Activated CD4-positive, alpha-beta memory T cell treated with anti-CD3 and anti-CD28 coated beads for 36 hours (primary cell): ENCODE measurements at regions of chr11 and their contacts with region 1.

Region 1: DNA sequence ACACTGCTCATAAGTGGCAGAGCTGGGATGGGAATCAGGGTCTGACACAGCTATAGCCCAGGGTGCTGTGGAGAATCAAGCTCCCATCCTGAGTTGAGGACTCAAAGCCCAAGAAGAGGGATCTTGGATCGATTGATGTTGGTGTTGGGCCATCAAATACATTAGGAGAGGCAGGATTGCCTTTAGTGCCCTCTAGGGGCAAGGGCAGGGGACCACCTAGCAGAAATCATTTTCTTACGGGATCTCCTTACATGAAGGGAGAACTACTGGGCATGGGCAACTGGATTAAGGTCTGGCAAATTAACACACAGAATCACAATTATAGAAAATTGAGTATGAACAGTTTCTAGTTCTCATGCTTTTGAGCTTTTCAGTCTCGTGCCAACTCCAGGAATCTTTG is 24.9 kb upstream of the EMSY start:
- DNase-seq: peak; percentile 30
- H3K4me3 Mint-ChIP-seq: no peak overlapping the region
- H3K27ac Mint-ChIP-seq: no peak overlapping the region
- H3K4me1 Mint-ChIP-seq: peaks cover 11% of the 10 kb centered on the region
- H3K27me3 Mint-ChIP-seq: peaks cover 11% of the 10 kb centered on the region

Region 2: GRCh38 chr11:76120513-76121101 is 299.3 kb before region 1 on chr11:
- CTCF ChIA-PET with region 1: no interaction called
- POLR2A ChIA-PET with region 1: no interaction called
- intact Hi-C with region 1: no loop called
- DNase-seq: no peak
- H3K4me3 Mint-ChIP-seq: no peak overlapping the region
- H3K27ac Mint-ChIP-seq: no peak overlapping the region
- H3K4me1 Mint-ChIP-seq: no peaks in the 10 kb centered on the region
- H3K27me3 Mint-ChIP-seq: no peaks in the 10 kb centered on the region

Region 3: DNA sequence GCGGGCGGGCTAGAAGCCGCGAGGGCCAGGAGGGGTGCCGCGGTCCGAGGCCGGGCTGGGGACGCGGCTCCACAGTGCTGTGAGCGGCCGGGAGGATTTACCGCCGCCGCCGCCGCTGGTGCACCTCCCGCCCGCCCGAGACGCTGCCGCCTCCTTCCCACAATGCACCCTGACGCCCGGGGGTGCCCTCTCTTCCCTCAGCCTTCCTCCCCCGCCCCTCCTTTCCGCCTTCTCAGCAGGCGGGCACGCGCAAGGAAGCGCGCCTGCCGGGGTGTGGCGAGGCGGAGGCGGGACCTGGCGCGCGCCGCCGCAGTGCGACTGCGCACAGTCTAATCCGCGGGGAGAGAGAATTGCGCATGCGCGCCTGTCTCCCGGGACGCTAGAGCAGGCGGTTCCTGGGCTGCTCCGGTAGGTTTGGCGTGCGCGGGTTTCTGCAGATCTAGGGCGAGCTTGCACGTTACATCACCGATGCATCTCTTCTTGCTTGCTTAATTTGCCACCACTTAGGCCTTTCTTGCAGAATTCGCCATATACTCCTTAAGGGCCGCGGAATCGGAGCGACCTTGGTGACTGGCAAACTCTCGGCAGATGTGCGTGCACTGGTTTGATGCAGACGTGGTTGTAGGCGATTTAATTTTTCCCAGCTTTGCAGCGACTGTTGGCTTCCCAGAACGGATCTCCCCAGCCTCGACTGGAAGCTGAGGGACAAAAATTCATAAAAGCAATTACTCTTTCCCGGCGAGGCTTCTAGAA is 38.8 kb before region 1 on chr11 and contains the starts of genes GVQW3 and THAP12:
- CTCF ChIA-PET with region 1: interaction called, 5 read pairs
- POLR2A ChIA-PET with region 1: no interaction called
- intact Hi-C with region 1: loop called (anchors 2 kb)
- DNase-seq: peak; percentile 98
- H3K4me3 Mint-ChIP-seq: peak within 1 kb of the TSS; percentile 87
- H3K27ac Mint-ChIP-seq: peak within 1 kb of the TSS; percentile 89
- H3K4me1 Mint-ChIP-seq: peaks cover 57% of the 10 kb centered on the region
- H3K27me3 Mint-ChIP-seq: no peaks in the 10 kb centered on the region
- total RNA-seq, gene GVQW3: 2.3 to 3.3 TPM
- total RNA-seq, gene THAP12: 46.2 to 49.2 TPM